ENCODE measurements at regions of chr16 and their contacts with region 1.

Region 1: GRCh38 chr16:96935-97381 is 18.9 kb downstream of the MPG start:
- DNase-seq: peak; percentile 55
- ATAC-seq: peak; percentile 99
- H3K4me3 ChIP-seq: no peak overlapping the region
- H3K27ac ChIP-seq: no peak overlapping the region
- H3K4me1 ChIP-seq: no peaks in the 10 kb centered on the region
- H3K27me3 ChIP-seq: no peaks in the 10 kb centered on the region
- CTCF ChIP-seq: peak; percentile 99 to 100 (median 100); a peak in 5 of 6 replicates
- EP300 ChIP-seq: no peak
- POLR2A ChIP-seq: peak; percentile 58
- RAD21 ChIP-seq: peak; percentile 79

Region 2: DNA sequence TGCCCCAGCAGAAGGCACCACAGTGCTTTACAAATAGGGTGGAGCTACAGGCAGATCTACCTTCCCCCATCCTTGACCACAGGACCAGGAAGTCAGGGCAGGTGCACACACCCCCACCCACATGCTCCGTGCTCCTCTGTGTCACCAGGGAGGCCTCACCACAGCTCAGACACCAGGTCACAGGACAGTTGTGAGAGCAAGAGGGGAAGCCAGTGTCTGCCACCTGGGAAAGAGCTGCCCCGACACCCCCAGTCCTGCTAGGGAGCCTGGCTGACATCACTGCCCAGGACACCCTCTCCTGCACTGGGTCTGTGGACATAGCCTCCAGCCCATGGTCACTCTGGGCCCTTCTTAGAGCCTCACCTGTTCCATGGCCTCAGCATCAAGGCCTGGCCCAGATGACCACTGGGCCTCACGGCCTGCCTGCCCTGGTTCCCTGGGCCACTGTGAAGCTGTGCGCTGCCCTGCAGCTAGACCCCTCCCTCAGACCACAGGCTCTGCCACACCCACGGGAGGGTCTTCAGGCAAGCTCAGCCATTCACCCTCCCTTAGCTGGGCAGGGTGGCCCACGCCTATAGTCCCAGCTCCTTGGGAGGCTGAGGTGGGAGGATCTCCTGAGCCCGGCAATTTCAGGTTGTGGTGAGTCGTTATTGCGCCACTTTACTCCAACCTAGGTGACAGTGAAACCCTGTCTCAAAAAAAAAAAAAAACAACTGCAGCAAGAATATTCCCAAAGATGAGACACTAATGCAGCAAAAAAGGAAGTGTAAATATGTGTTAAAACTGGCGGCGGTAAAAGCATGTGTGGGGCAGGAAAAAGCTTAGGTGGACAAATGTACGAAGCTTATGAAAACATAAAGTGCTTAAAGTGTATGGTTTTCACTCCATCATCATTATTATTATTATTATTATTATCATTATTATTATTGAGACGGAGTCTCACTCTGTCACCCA is 57.7 kb before region 1 on chr16:
- CTCF ChIA-PET with region 1: interaction called, 16 read pairs
- POLR2A ChIA-PET with region 1: interaction called, 3 read pairs
- RAD21 ChIA-PET with region 1: interaction called, 4 read pairs
- SMC1A ChIA-PET with region 1: no interaction called
- in situ Hi-C with region 1: no loop called
- intact Hi-C with region 1: no loop called
- DNase-seq: peak; percentile 79
- ATAC-seq: peak; percentile 91
- H3K4me3 ChIP-seq: no peak overlapping the region
- H3K27ac ChIP-seq: peak overlapping the region; percentile 75
- H3K4me1 ChIP-seq: peaks cover 34% of the 10 kb centered on the region
- H3K27me3 ChIP-seq: no peaks in the 10 kb centered on the region
- CTCF ChIP-seq: no peak
- EP300 ChIP-seq: peak; percentile 35 to 76; a peak in 3 of 4 replicates
- POLR2A ChIP-seq: peak; percentile 82
- RAD21 ChIP-seq: no peak

Region 3: DNA sequence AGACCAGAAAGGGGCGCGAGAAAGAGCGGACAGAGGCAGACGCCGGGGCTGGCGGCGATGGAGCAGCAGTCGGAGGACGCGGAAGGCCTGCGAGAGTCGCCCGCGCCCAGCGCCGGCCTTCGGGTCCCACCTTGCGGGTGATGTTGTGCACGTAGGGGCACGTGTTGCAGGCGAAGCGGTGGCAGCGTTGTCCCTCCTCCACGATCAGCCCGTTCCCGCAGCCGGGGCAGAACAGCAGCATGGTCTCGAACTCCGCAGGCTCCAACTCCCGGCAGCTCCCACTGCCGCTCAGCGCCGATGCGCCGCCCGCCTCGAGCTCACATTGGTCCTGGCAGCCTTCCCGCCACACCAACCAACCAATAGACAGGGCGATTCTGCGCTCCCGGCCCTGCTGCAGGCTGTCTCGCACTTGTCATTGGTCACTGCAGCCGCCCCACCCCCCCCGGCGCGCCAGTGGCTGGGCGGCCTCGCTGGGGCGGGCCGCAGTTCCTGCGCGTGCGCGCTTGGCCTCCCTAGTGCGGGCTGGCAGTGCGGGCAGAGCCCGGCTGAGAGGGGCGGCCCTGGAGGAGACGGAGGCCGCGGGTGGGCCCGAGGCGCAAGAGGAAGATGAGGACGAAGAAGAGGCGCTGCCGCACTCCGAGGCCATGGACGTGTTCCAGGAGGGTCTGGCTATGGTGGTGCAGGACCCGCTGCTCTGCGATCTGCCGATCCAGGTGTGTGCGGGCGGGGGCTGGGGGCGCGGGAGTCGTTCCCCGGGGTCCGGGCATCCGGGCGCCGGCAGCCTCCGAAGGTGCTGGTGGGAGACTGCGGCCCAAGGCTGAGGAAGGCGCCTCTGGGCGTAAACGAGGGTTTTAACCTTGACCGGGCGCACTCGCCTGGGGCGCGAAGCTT is 43.4 kb before region 1 on chr16 and contains the starts of genes POLR3K and SNRNP25:
- CTCF ChIA-PET with region 1: interaction called, 16 read pairs
- POLR2A ChIA-PET with region 1: no interaction called
- RAD21 ChIA-PET with region 1: interaction called, 3 read pairs
- SMC1A ChIA-PET with region 1: interaction called, 9 read pairs
- in situ Hi-C with region 1: no loop called
- intact Hi-C with region 1: no loop called
- DNase-seq: peak; percentile 84
- ATAC-seq: peak; percentile 98
- H3K4me3 ChIP-seq: peak within 1 kb of the TSS; percentile 93
- H3K27ac ChIP-seq: peak within 1 kb of the TSS; percentile 87
- H3K4me1 ChIP-seq: no peaks in the 10 kb centered on the region
- H3K27me3 ChIP-seq: no peaks in the 10 kb centered on the region
- CTCF ChIP-seq: no peak
- EP300 ChIP-seq: no peak
- POLR2A ChIP-seq: peak; percentile 95
- RAD21 ChIP-seq: no peak
- polyA plus RNA-seq, gene POLR3K: 195 to 222 TPM
- polyA plus RNA-seq, gene SNRNP25: 40.9 to 59.8 TPM

Region 4: GRCh38 chr16:77807-78443 is 19.0 kb before region 1 on chr16 and contains the start of gene MPG:
- CTCF ChIA-PET with region 1: interaction called, 319 read pairs
- POLR2A ChIA-PET with region 1: interaction called, 7 read pairs
- RAD21 ChIA-PET with region 1: interaction called, 4 read pairs
- SMC1A ChIA-PET with region 1: interaction called, 7 read pairs
- in situ Hi-C with region 1: no loop called
- intact Hi-C with region 1: no loop called
- DNase-seq: no peak
- ATAC-seq: peak; percentile 84
- H3K4me3 ChIP-seq: peak within 1 kb of the TSS; percentile 82
- H3K27ac ChIP-seq: peak within 1 kb of the TSS; percentile 85
- H3K4me1 ChIP-seq: peaks cover 20% of the 10 kb centered on the region
- H3K27me3 ChIP-seq: peaks cover 2 to 4% of the 10 kb centered on the region in 2 experiments; a peak in 3 of 4 replicates
- CTCF ChIP-seq: no peak
- EP300 ChIP-seq: no peak
- POLR2A ChIP-seq: peak; percentile 79
- RAD21 ChIP-seq: no peak
- polyA plus RNA-seq, gene MPG: 0.32 to 4.8 TPM

Region 5: GRCh38 chr16:84718-85406 is 12.1 kb before region 1 on chr16:
- CTCF ChIA-PET with region 1: interaction called, 29 read pairs
- POLR2A ChIA-PET with region 1: interaction called, 3 read pairs
- RAD21 ChIA-PET with region 1: interaction called, 12 read pairs
- SMC1A ChIA-PET with region 1: interaction called, 7 read pairs
- in situ Hi-C with region 1: no loop called
- intact Hi-C with region 1: no loop called
- DNase-seq: peak; percentile 65
- ATAC-seq: peak; percentile 90
- H3K4me3 ChIP-seq: no peak overlapping the region
- H3K27ac ChIP-seq: peak overlapping the region; percentile 54
- H3K4me1 ChIP-seq: peaks cover 17% of the 10 kb centered on the region
- H3K27me3 ChIP-seq: no peaks in the 10 kb centered on the region
- CTCF ChIP-seq: no peak
- EP300 ChIP-seq: peak in 1 of 2 experiments; percentile 48; a peak in 1 of 4 replicates
- POLR2A ChIP-seq: peak; percentile 65
- RAD21 ChIP-seq: no peak

Region 6: GRCh38 chr16:154223-155030 is 57.5 kb after region 1 on chr16:
- CTCF ChIA-PET with region 1: no interaction called
- POLR2A ChIA-PET with region 1: no interaction called
- RAD21 ChIA-PET with region 1: no interaction called
- SMC1A ChIA-PET with region 1: no interaction called
- in situ Hi-C with region 1: no loop called
- intact Hi-C with region 1: no loop called
- DNase-seq: no peak
- ATAC-seq: peak; percentile 62
- H3K4me3 ChIP-seq: no peak overlapping the region
- H3K27ac ChIP-seq: no peak overlapping the region
- H3K4me1 ChIP-seq: no peaks in the 10 kb centered on the region
- H3K27me3 ChIP-seq: peaks cover 1 to 3% of the 10 kb centered on the region in 2 experiments; a peak in 3 of 4 replicates
- CTCF ChIP-seq: no peak
- EP300 ChIP-seq: no peak
- POLR2A ChIP-seq: no peak
- RAD21 ChIP-seq: no peak

Region 7: GRCh38 chr16:324451-325334 is 227.7 kb after region 1 on chr16:
- CTCF ChIA-PET with region 1: no interaction called
- POLR2A ChIA-PET with region 1: no interaction called
- RAD21 ChIA-PET with region 1: no interaction called
- SMC1A ChIA-PET with region 1: no interaction called
- in situ Hi-C with region 1: no loop called
- intact Hi-C with region 1: no loop called
- DNase-seq: no peak
- ATAC-seq: peak; percentile 87
- H3K4me3 ChIP-seq: peak overlapping the region; percentile 68
- H3K27ac ChIP-seq: peak overlapping the region; percentile 69
- H3K4me1 ChIP-seq: peaks cover 27% of the 10 kb centered on the region
- H3K27me3 ChIP-seq: no peaks in the 10 kb centered on the region
- CTCF ChIP-seq: peak in 1 of 3 experiments; percentile 12; a peak in 1 of 6 replicates
- EP300 ChIP-seq: no peak
- POLR2A ChIP-seq: no peak
- RAD21 ChIP-seq: no peak

Region 8: GRCh38 chr16:361872-362701 is 265.1 kb after region 1 on chr16:
- CTCF ChIA-PET with region 1: interaction called, 16 read pairs
- POLR2A ChIA-PET with region 1: no interaction called
- RAD21 ChIA-PET with region 1: interaction called, 5 read pairs
- SMC1A ChIA-PET with region 1: no interaction called
- in situ Hi-C with region 1: no loop called
- intact Hi-C with region 1: no loop called
- DNase-seq: no peak
- ATAC-seq: peak; percentile 92
- H3K4me3 ChIP-seq: no peak overlapping the region
- H3K27ac ChIP-seq: no peak overlapping the region
- H3K4me1 ChIP-seq: no peaks in the 10 kb centered on the region
- H3K27me3 ChIP-seq: no peaks in the 10 kb centered on the region
- CTCF ChIP-seq: peak; percentile 70 to 84 (median 79)
- EP300 ChIP-seq: no peak
- POLR2A ChIP-seq: no peak
- RAD21 ChIP-seq: peak; percentile 86